ENCODE measurements at regions of chr9 and their contacts with region 1.

Region 1: DNA sequence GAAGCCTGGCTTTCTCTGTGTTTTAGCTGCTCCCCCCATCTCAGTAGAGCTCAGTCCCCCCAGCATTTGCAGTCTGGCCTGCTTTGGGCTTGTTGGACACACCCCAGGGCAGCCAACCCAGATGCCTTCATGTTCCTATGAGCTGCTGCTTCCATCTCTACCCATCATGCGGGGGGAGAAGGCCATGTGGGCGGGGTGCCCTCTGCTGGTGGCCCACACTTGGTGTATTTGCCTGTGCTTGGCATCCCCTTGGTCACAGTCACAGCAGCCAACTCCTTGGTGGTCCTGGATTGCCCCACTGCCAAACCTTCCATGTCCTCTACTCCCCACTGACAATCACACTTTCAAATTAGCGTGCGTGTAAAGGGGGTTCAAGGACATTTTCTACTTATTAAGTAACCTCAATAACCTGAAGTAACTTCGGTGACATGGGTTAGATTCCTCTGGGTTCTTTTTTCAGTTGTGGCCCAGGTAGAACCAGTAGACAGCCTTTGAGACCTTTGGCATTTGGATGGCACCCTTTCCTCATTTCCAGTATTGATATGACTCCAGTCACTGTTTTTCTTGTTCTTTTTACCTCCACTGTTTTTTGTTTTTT is 42.8 kb downstream of the SNX30 start:
- DNase-seq: peak; percentile 49 to 78 (median 58)
- ATAC-seq: peak; percentile 96
- H3K4me3 ChIP-seq: no peak overlapping the region
- H3K27ac ChIP-seq: no peak overlapping the region
- H3K4me1 ChIP-seq: no peaks in the 10 kb centered on the region; a peak in 2 of 5 replicates
- H3K27me3 ChIP-seq: peaks cover 0 to 5% of the 10 kb centered on the region in 2 experiments; a peak in 1 of 5 replicates
- CTCF ChIP-seq: peak; percentile 80 to 88 (median 83)
- EP300 ChIP-seq: no peak
- POLR2A ChIP-seq: no peak
- RAD21 ChIP-seq: peak; percentile 76 to 88

Region 2: GRCh38 chr9:112665347-112665746 is 128.0 kb before region 1 on chr9:
- CTCF ChIA-PET with region 1: no interaction called
- POLR2A ChIA-PET with region 1: no interaction called
- in situ Hi-C with region 1: no loop called
- intact Hi-C with region 1: loop called (anchors 10 kb)
- DNase-seq: peak in 2 of 4 experiments; percentile 15 to 42
- ATAC-seq: peak; percentile 66
- H3K4me3 ChIP-seq: no peak overlapping the region
- H3K27ac ChIP-seq: no peak overlapping the region
- H3K4me1 ChIP-seq: no peaks in the 10 kb centered on the region
- H3K27me3 ChIP-seq: 0 out of 5 replicates have a peak, but pooled peaks cover 0 to 2% of the 10 kb centered on the region in 2 experiments
- CTCF ChIP-seq: peak; percentile 22 to 65 (median 50); a peak in 4 of 6 replicates
- EP300 ChIP-seq: no peak
- POLR2A ChIP-seq: no peak
- RAD21 ChIP-seq: peak; percentile 42 to 82

Region 3: DNA sequence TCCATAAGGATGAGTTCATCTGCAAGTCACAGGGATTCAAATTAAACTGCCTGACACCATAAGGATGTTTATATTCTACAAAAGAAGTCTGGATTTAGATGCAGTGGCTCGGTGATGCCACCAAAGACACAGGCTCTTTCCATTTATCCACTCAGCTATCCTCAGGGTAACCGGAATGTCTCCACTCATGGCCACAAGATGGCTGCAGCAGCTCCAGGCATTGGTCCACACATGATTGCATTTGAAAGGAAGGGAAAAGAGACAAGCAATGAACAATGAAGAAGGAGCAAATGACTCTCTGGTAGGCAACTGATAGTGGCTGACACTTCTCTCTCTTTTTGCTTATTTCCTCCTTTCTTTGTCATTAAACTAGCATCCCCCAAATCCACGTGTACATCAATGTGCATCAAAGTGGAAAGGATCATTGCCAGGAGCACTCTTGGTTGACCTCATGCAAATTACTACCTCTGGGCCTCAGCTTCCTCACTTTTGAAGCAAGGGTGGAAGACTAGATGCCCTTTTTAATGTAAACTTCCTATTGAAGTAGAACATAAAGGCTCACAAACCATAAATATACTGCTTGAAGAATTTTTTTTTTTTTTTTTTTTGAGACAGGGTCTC is 50.0 kb before region 1 on chr9:
- CTCF ChIA-PET with region 1: no interaction called
- POLR2A ChIA-PET with region 1: no interaction called
- in situ Hi-C with region 1: no loop called
- intact Hi-C with region 1: loop called (anchors 1 kb)
- DNase-seq: peak in 1 of 4 experiments; percentile 25
- ATAC-seq: peak; percentile 74
- H3K4me3 ChIP-seq: no peak overlapping the region
- H3K27ac ChIP-seq: no peak overlapping the region
- H3K4me1 ChIP-seq: no peaks in the 10 kb centered on the region
- H3K27me3 ChIP-seq: no peaks in the 10 kb centered on the region
- CTCF ChIP-seq: peak in 2 of 3 experiments; percentile 32 to 41; a peak in 3 of 6 replicates
- EP300 ChIP-seq: no peak
- POLR2A ChIP-seq: no peak
- RAD21 ChIP-seq: peak in 1 of 2 experiments; percentile 43; a peak in 2 of 4 replicates

Measured in K562 (cell line).